Activated naive CD4-positive, alpha-beta T cell treated with anti-CD3 and anti-CD28 coated beads for 36 hours (primary cell): ENCODE measurements at regions of chr6 and their contacts with region 1.

Region 1: GRCh38 chr6:105484238-105485161 is 81.6 kb upstream of the PREP start:
- DNase-seq: no peak
- H3K4me3 Mint-ChIP-seq: no peak overlapping the region
- H3K27ac Mint-ChIP-seq: no peak overlapping the region
- H3K4me1 Mint-ChIP-seq: no peaks in the 10 kb centered on the region
- H3K27me3 Mint-ChIP-seq: peaks cover 18% of the 10 kb centered on the region

Region 2: DNA sequence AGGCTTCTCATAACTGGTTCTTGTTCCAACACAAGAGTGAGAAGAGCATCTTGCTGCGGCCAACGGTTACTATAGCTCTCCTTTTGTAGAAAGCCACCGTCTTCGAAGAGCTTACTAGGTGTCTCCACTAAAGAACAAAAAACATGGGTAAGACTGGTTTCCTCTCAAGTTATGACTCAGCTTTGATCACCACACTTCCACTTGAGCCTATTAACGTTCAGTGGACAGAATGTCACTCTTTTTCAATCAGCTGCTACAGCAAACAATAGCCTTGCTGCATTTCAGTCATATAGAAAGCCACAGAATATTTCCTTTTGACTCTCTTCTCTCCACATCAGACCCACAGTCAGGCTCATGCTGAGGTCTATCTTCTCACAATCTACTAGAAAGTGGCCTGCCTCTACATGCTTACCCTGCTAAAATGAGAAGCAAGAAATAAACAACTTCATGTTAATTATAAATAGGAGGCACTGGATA is 161.9 kb after region 1 on chr6:
- CTCF ChIA-PET with region 1: interaction called, 3 read pairs
- intact Hi-C with region 1: loop called (anchors 2 kb)
- DNase-seq: peak; percentile 35
- H3K4me3 Mint-ChIP-seq: no peak overlapping the region
- H3K27ac Mint-ChIP-seq: no peak overlapping the region
- H3K4me1 Mint-ChIP-seq: peaks cover 46% of the 10 kb centered on the region
- H3K27me3 Mint-ChIP-seq: peaks cover 20% of the 10 kb centered on the region

Region 3: DNA sequence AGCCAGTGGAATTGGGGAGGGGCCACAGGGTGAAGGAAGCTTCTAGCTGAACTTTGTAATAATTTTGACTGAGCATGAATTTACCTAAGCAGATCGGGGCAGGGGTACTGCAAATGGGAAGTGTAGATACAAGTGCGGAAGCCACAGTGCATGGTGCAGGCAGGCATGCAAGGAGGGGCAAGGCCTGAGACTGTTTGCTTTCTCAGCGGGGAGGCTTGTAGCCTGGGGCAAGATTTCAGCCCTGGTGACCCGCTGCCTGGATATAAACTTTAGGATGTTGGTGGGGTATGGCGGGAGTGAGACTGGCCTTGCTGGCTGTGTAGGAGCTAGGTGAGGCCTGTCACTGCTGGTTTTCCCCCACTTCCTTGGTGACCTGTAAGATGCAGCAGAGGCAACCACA is 184.7 kb after region 1 on chr6:
- CTCF ChIA-PET with region 1: no interaction called
- intact Hi-C with region 1: no loop called
- DNase-seq: no peak
- H3K4me3 Mint-ChIP-seq: no peak overlapping the region
- H3K27ac Mint-ChIP-seq: no peak overlapping the region
- H3K4me1 Mint-ChIP-seq: no peaks in the 10 kb centered on the region
- H3K27me3 Mint-ChIP-seq: peaks cover 11% of the 10 kb centered on the region

Region 4: GRCh38 chr6:105733565-105734162 is 249.2 kb after region 1 on chr6:
- CTCF ChIA-PET with region 1: no interaction called
- intact Hi-C with region 1: loop called (anchors 5 kb)
- DNase-seq: no peak
- H3K4me3 Mint-ChIP-seq: no peak overlapping the region
- H3K27ac Mint-ChIP-seq: no peak overlapping the region
- H3K4me1 Mint-ChIP-seq: peaks cover 3% of the 10 kb centered on the region
- H3K27me3 Mint-ChIP-seq: no peaks in the 10 kb centered on the region

Region 5: DNA sequence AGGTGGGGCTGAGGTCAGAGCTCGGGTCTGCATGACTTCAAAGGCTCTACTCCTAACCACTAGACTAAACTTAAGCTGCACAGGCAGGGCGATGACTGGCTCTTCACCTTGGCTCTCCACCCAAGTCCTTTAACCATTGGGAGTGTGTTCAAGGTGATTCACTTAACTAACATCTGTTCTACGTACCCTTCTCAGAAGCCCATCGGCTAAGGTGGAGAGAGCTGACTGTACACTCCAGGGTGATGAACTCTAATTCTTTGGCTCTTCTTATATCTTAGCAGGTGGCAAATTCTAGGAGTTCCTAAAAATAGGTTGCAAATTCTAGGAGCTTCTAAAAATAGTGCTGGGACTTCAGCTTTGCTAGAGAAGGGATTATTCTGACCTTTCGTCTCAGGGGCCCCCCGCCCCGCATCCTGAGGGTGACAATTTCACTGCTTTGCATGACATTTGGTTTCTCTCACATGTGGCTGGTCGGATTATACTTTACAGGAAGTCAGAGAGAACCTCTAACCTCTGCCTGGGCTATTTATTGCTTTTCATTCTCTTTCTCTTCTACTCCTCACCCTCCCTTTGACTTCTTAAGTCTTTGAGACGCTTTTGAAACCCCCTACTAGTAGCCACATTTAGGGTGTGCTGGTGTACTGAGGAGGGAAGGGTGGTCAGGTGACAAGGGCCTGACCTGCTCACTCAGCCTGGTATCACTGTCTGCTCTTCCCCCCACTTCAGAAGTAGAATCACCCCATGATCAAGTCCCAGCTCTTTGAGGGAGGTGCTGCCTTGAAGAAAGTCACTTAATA is 657.1 kb after region 1 on chr6:
- CTCF ChIA-PET with region 1: no interaction called
- intact Hi-C with region 1: loop called (anchors 5 kb)
- DNase-seq: peak; percentile 75
- H3K4me3 Mint-ChIP-seq: peak overlapping the region; percentile 13
- H3K27ac Mint-ChIP-seq: peak overlapping the region; percentile 83
- H3K4me1 Mint-ChIP-seq: peaks cover 31% of the 10 kb centered on the region
- H3K27me3 Mint-ChIP-seq: no peaks in the 10 kb centered on the region

Region 6: DNA sequence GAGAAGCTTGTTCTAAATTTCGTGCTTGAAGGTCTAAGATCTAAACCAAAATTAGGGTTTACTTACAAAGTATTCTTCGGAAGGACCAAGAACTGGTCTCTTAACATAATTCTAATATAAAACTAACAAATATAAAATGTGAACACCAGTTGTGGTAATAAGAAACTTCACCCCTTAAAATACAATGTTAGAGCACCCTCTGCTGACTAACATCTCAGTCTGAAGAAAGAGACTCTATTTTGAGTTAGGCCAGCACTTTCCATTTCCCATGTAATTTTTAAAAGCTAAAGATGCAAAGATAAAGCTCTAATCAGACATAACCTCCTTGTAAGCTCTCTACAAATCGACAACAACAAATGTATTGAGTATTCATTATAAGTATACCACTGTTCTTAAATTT is 816.4 kb after region 1 on chr6:
- CTCF ChIA-PET with region 1: no interaction called
- intact Hi-C with region 1: loop called (anchors 2 kb)
- DNase-seq: no peak
- H3K4me3 Mint-ChIP-seq: no peak overlapping the region
- H3K27ac Mint-ChIP-seq: no peak overlapping the region
- H3K4me1 Mint-ChIP-seq: no peaks in the 10 kb centered on the region
- H3K27me3 Mint-ChIP-seq: no peaks in the 10 kb centered on the region